Activated B cell treated with CpG ODN at 0.5 μM for 24 hours (primary cell): ENCODE measurements at regions of chr7 and their contacts with region 1.

Region 1: GRCh38 chr7:106793015-106793975 is 71.8 kb upstream of the PIK3CG start:
- DNase-seq: no peak
- ATAC-seq: peak; percentile 60
- H3K4me3 Mint-ChIP-seq: no peak overlapping the region
- H3K27ac Mint-ChIP-seq: no peak overlapping the region
- H3K4me1 Mint-ChIP-seq: peaks cover 2% of the 10 kb centered on the region
- H3K27me3 Mint-ChIP-seq: peaks cover 4% of the 10 kb centered on the region
- CTCF ChIP-seq: peak; percentile 92

Region 2: DNA sequence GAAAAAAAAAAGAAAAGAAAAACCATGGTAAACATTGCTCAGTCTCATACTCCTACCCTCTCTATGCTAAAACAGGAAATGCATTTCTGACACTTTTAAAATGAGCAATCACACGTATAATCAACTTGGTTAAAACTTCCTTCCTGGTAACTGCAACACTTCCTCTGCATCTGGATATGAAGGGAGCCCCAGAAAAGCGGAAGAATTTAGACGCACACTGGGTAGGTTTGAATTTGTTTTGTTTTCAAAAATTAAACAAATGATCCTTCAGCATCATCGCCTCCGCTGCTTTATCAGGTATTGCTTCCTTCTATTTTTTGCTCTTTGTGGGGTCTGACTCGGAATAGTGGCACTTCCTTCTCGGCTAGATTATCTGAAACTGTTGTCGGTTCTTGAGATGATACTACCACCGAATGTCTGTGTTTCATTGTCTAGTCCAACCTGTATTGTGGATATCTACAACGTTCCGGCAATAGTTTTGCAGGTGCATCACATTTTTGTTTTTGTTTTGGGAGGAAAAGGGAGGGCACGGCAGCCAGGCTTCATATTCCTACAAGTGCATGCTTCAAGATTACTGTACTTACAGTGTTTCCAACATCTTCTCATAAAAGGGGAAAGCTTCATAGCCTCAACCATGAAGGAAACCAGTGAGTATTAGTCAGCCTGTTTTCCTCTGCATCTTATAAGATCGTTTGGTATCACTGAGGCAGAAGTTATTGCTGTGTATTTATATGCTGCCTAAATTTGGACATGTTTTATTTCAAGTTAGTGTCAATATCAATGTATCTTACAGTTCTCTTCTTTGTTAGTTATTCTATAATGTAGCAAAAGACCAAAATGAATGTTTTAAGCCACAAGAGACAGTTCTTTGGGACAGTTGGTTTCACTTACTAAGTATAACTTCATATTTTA is 72.1 kb after region 1 on chr7 and contains the start of gene PIK3CG:
- CTCF ChIA-PET with region 1: interaction called, 3 read pairs
- POLR2A ChIA-PET with region 1: no interaction called
- intact Hi-C with region 1: loop called (anchors 1 kb)
- DNase-seq: no peak
- ATAC-seq: peak; percentile 83
- H3K4me3 Mint-ChIP-seq: peak within 1 kb of the TSS; percentile 91
- H3K27ac Mint-ChIP-seq: peak within 1 kb of the TSS; percentile 90
- H3K4me1 Mint-ChIP-seq: peaks cover 71% of the 10 kb centered on the region
- H3K27me3 Mint-ChIP-seq: no peaks in the 10 kb centered on the region
- CTCF ChIP-seq: no peak
- total RNA-seq, gene PIK3CG: 62.0 and 63.6 TPM in 2 replicates

Region 3: GRCh38 chr7:106895246-106895864 is 102.1 kb after region 1 on chr7:
- CTCF ChIA-PET with region 1: interaction called, 3 read pairs
- POLR2A ChIA-PET with region 1: no interaction called
- intact Hi-C with region 1: loop called (anchors 1 kb)
- DNase-seq: peak; percentile 42
- ATAC-seq: peak; percentile 93
- H3K4me3 Mint-ChIP-seq: peak overlapping the region; percentile 46
- H3K27ac Mint-ChIP-seq: peak overlapping the region; percentile 82
- H3K4me1 Mint-ChIP-seq: peaks cover 77% of the 10 kb centered on the region
- H3K27me3 Mint-ChIP-seq: no peaks in the 10 kb centered on the region
- CTCF ChIP-seq: no peak

Region 4: DNA sequence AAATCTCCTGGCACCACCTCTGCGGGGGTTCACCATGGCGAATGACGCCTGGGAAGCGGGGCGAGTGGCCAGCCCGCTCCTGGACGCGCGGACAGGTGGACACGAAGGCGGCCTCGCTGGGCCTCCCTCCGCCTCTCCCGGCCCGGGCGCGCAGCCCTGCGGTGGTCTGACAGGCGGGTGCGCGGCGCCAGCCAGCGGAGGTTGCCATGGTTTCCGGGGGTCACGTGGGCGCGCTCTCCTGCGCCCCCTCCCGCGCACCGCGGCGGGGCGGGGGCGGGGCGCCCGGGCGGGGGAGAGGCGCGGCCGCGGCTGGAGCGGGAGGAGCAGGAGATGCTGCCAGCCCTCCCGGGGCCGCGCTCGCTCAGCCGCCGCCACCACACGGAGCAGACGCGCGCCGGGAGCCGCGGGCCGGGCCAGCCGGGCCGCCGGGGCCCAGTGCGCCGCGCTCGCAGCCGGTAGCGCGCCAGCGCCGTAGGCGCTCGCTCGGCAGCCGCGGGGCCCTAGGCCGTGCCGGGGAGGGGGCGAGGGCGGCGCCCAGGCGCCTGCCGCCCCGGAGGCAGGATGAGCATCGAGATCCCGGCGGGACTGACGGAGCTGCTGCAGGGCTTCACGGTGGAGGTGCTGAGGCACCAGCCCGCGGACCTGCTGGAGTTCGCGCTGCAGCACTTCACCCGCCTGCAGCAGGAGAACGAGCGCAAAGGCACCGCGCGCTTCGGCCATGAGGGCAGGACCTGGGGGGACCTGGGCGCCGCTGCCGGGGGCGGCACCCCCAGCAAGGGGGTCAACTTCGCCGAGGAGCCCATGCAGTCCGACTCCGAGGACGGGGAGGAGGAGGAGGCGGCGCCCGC is 251.3 kb after region 1 on chr7 and contains the start of gene PRKAR2B:
- CTCF ChIA-PET with region 1: no interaction called
- POLR2A ChIA-PET with region 1: no interaction called
- intact Hi-C with region 1: loop called (anchors 5 kb)
- DNase-seq: peak; percentile 70
- ATAC-seq: peak; percentile 90
- H3K4me3 Mint-ChIP-seq: peak within 1 kb of the TSS; percentile 86
- H3K27ac Mint-ChIP-seq: no peak within 1 kb of the TSS
- H3K4me1 Mint-ChIP-seq: peaks cover 9% of the 10 kb centered on the region
- H3K27me3 Mint-ChIP-seq: peaks cover 26% of the 10 kb centered on the region
- CTCF ChIP-seq: no peak
- total RNA-seq, gene PRKAR2B: 0.64 and 0.71 TPM in 2 replicates

Region 5: DNA sequence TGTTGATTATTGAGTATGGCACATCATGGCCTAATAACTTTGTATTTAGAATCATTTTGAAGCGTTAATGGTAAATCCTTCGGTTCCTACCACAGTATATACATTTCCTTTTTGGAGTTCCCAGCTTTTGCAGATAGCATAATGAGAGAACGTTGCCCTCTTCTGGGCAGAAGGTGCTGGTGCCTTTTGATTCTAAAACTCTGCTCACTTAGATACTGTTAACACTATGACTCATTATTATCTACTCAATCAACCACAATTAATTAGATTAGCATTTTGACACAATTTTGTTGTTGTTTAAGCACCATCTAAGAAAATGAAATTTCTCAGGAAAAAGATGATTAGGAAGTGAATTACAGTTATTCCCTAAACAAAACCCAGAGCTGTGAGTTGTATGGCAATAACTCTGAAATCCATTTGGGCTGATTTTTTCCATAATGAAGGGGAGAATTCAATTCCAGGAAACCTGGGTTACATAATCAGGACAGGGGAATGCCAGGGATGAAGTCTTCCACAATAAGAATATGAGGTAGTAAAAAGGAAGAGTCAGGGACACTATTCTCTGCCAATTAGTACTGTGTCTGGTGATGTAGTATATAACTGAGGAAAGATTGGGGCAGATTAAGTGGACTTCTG is 1086.2 kb after region 1 on chr7:
- CTCF ChIA-PET with region 1: interaction called, 3 read pairs
- POLR2A ChIA-PET with region 1: no interaction called
- intact Hi-C with region 1: loop called (anchors 2 kb)
- DNase-seq: no peak
- ATAC-seq: peak; percentile 74
- H3K4me3 Mint-ChIP-seq: no peak overlapping the region
- H3K27ac Mint-ChIP-seq: no peak overlapping the region
- H3K4me1 Mint-ChIP-seq: peaks cover under 1% of the 10 kb centered on the region
- H3K27me3 Mint-ChIP-seq: peaks cover 20% of the 10 kb centered on the region
- CTCF ChIP-seq: no peak